Upper lobe of right lung (tissue), 1 donor: ENCODE measurements at regions of chr6 and their contacts with region 1.

Region 1: GRCh38 chr6:11064836-11065235 is 20.7 kb upstream of the ELOVL2 start:
- DNase-seq: no peak
- ATAC-seq: no peak
- H3K4me3 ChIP-seq: no peak overlapping the region
- H3K27ac ChIP-seq: no peak overlapping the region
- H3K4me1 ChIP-seq: no peaks in the 10 kb centered on the region
- H3K27me3 ChIP-seq: peaks cover 5% of the 10 kb centered on the region
- CTCF ChIP-seq: no peak

Region 2: DNA sequence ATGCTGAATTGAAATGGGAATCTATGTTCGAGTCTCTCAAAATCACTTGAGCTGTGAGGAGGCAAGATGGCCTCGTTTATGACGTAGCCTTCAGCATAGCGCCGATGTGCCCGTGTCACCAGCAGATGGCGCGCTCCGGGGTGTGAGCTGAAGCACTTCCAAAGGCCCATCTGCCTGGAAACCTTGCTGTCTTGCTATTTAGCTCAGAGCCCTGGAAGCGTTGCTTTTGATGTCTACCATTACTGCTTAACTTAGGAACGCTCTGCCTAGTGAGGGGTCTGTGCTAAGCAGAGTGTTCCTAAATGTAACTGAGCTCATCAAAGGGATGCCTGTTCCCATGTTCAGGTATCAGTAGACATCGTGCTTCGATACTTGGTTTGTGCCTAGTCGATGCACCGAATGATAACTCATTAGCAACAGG is 110.2 kb before region 1 on chr6:
- intact Hi-C with region 1: loop called (anchors 10 kb)
- DNase-seq: peak; percentile 87
- ATAC-seq: peak; percentile 94
- H3K4me3 ChIP-seq: no peak overlapping the region
- H3K27ac ChIP-seq: no peak overlapping the region
- H3K4me1 ChIP-seq: no peaks in the 10 kb centered on the region
- H3K27me3 ChIP-seq: no peaks in the 10 kb centered on the region
- CTCF ChIP-seq: peak; percentile 75